Panc1 (cell line): ENCODE measurements at regions of chr12 and their contacts with region 1.

Region 1: DNA sequence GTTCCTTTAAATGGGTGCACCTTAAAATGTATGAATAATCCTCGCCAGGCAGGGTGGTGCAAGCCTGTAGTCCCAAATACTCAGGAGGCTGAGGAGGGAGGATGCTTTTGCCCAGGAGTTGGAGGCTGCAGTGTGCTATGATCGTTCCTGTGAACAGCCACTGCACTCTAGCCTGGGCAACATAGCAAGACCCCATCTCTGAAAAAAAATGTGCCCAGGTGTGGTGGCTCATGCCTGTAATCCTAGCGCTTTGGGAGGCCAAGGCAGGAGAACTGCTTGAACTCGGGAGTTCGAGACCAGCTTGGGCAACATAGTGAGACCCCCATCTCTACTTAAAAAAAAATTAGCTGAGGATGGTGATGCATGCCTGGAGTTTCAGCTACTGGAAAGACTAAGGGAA is 39.6 kb downstream of the ACACB start:
- DNase-seq: no peak
- ATAC-seq: no peak
- H3K4me3 ChIP-seq: no peak overlapping the region
- H3K27ac ChIP-seq: no peak overlapping the region
- H3K4me1 ChIP-seq: no peaks in the 10 kb centered on the region
- H3K27me3 ChIP-seq: no peaks in the 10 kb centered on the region
- CTCF ChIP-seq: no peak

Region 2: DNA sequence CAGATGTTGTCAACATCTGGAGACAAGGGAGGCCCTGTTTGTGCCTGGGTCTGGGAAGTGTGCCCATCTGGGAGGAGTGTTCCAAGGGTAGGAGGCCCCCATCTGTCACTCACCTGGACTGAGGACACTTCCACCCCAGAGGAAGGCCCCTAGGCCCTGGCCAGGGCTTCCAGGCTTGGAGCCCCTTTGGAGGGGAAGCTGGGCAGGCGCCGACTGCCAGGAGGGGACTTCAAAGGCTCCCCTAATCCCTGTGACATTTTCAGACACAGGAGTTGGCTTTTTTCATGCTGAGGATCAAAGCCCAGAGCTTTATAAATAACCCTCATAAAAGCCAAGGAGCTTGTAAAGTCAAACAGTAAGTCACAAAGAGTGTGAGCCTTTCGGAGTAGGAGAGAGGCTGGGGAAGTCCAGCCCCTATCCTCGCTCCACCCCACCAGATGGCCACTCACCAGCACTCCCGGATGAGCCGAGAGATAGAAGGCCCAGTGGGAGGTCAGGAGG is 540.0 kb after region 1 on chr12:
- CTCF ChIA-PET with region 1: no interaction called
- POLR2A ChIA-PET with region 1: interaction called, 13 read pairs
- in situ Hi-C with region 1: no loop called
- intact Hi-C with region 1: no loop called
- DNase-seq: no peak
- ATAC-seq: peak; percentile 37; the same call in 1 of the 2 replicates
- H3K4me3 ChIP-seq: no peak overlapping the region
- H3K27ac ChIP-seq: no peak overlapping the region
- H3K4me1 ChIP-seq: peaks cover 13% of the 10 kb centered on the region
- H3K27me3 ChIP-seq: no peaks in the 10 kb centered on the region
- CTCF ChIP-seq: no peak